ENCODE measurements at regions of chr11 and their contacts with region 1.

Region 1: GRCh38 chr11:48354677-48355076 is 11.6 kb downstream of the OR4C5 start:
- DNase-seq: no peak

Region 2: GRCh38 chr11:50037251-50037650 is 1682.6 kb after region 1 on chr11:
- in situ Hi-C with region 1: loop called (anchors 25 kb)
- DNase-seq: no peak